HEK293T (cell line): ENCODE measurements at regions of chr4 and their contacts with region 1.

Region 1: GRCh38 chr4:46648088-46648744 is 258.3 kb upstream of the GABRA2 start:
- DNase-seq: peak; percentile 17

Region 2: DNA sequence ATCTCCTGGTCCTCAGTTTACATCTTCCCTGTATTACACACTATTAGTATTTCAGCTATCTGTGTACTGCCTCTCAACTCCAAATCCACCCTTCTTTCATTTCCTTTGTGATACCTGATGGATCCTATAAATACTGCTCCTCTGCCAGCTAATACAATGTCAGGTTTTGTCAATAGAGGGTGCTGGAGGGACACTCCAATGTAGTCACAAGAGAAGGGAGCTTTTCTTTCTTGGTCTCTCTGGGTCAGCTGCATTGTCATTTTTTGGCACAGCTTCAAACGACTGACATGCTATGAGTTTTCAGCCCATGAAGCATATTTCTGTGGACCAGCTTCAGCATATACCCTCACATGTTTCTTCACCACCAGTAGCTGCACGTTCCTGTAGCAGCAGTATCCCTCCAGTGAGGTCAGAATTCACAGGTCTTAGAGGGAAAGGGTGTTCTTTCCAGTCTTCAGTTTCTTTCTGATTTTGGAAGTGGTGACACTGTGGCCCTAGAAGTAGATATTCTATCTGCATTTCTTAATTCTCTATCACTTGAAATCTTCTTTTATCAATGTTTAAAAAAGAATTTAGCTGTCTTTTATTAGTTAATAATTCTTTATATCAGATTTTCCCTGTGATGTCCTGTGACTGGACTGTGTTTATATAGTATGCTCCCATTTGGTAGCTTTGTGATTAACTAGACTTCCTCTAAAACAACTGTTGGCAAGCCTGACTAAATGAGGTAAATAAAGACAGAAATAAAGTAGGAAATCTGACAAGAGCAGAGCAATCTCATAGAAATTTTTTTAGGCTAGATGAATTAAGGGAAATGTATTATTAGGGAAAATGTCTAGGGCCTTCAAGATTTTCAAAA is 318.9 kb before region 1 on chr4:
- CTCF ChIA-PET with region 1: interaction called, 31 read pairs
- POLR2A ChIA-PET with region 1: interaction called, 3 read pairs
- DNase-seq: peak; percentile 3

Region 3: GRCh38 chr4:46667801-46668200 is 19.6 kb after region 1 on chr4:
- CTCF ChIA-PET with region 1: no interaction called
- POLR2A ChIA-PET with region 1: no interaction called
- DNase-seq: no peak